Activated T-helper 1 cell treated with anti-CD3 and anti-CD28 coated beads, Interleukin-12 subunit alpha, Interleukin-12 subunit beta, Interleukin-2, Interleukin-4 antibody, amounts not matched to agents 30 ng/mL and 10 ng/mL and 1 ng/mL, durations not matched to agents 14 hours and 24 hours and 36 hours (primary cell): ENCODE measurements at regions of chr5 and their contacts with region 1.

Region 1: DNA sequence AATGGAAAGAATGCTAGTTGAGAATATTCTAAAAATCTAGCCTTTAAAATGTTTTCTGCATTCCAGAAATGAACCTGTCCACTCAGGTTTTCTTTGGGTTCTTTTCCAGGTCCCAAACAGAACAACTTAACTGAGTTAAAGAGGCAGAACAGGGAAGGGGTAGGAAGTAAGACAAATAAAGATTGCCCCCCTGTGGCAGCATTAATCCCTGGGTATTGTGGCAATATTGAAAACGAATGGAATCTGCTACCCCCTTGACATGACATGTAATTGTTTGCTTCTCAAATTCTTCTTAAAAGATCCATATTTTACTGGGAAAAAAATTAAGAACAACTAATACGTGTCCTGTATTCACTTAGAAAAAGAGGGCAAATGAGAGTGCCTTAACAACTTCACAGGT is 9.3 kb upstream of the RBM22 start:
- DNase-seq: no peak
- H3K4me3 Mint-ChIP-seq: no peak overlapping the region
- H3K27ac Mint-ChIP-seq: no peak overlapping the region
- H3K4me1 Mint-ChIP-seq: no peaks in the 10 kb centered on the region
- H3K27me3 Mint-ChIP-seq: no peaks in the 10 kb centered on the region

Region 2: DNA sequence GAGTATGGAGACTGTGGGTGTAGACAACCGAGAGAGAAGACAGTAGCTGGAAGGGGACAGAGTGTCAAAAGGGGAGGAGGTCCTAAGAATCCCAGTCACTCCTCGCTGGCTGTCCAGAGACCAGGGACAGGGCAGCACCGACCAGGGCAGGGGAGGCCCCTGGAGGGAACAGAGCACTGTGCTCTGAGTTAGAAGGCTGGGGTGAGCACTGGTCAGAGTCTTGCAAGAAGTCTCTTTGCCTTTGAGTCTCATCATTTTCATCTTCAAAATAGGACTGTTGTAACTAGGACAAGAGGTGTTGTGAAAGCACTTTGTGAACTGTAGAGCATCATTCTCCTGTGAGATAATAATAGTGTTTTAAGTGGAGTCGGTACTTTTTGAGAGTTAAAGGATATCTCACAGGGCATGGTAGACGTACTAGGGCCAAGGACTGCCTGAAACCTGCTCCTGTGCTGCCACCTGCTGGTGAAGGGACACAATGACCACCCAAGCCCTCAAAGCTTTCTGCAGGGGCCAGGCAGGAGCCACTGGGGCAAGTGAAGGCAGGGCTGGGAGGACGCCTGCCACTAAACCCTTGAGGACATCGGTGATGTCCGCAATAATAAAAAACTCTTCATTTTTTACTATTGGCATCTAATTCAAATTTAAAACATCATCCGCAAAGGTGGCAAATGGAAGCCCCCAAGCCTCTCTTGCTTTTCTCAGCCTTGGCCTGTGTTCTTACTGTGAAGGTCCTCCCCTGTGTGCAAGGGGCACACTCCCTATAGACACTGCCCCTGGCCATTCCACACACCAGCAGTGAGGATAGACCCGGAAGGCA is 492.1 kb before region 1 on chr5:
- intact Hi-C with region 1: no loop called
- DNase-seq: peak; percentile 67
- H3K4me3 Mint-ChIP-seq: no peak overlapping the region
- H3K27ac Mint-ChIP-seq: no peak overlapping the region
- H3K4me1 Mint-ChIP-seq: no peaks in the 10 kb centered on the region
- H3K27me3 Mint-ChIP-seq: peaks cover 13% of the 10 kb centered on the region

Region 3: GRCh38 chr5:150729859-150730258 is 19.7 kb after region 1 on chr5:
- intact Hi-C with region 1: loop called (anchors 2 kb)
- DNase-seq: no peak
- H3K4me3 Mint-ChIP-seq: no peak overlapping the region
- H3K27ac Mint-ChIP-seq: no peak overlapping the region
- H3K4me1 Mint-ChIP-seq: peaks cover 10% of the 10 kb centered on the region
- H3K27me3 Mint-ChIP-seq: no peaks in the 10 kb centered on the region